ENCODE measurements at regions of chr5 and their contacts with region 1.

Region 1: DNA sequence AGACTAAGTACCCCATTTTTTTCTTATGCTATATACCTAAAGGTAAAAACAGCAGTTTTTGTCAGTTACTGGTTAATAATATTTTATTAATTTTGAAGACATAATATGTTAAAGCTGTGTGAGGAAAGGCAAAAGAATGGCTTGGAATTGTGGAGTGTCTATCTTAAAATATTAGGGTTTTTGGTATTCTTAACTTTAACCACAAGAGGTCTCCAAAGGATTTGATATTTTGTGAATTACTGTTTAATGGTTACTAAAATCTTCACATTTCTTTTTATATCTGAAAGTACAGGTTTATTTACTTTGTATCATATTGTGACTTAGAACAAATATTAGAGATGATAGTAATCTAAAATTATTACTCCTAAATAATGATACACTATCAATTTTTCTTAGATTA is 32.0 kb upstream of the DHFR start:
- DNase-seq: no peak
- H3K4me3 ChIP-seq: no peak overlapping the region
- H3K27ac ChIP-seq: no peak overlapping the region
- H3K4me1 ChIP-seq: no peaks in the 10 kb centered on the region
- H3K27me3 ChIP-seq: no peaks in the 10 kb centered on the region
- CTCF ChIP-seq: peak in 1 of 2 donors; percentile 29

Region 2: GRCh38 chr5:81105261-81105877 is 418.6 kb after region 1 on chr5:
- CTCF ChIA-PET with region 1: interaction called, 4 read pairs
- dilution Hi-C with region 1: no loop called
- in situ Hi-C with region 1: no loop called
- intact Hi-C with region 1: loop called (anchors 1 kb)
- DNase-seq: no peak
- H3K4me3 ChIP-seq: no peak overlapping the region
- H3K27ac ChIP-seq: no peak overlapping the region
- H3K4me1 ChIP-seq: no peaks in the 10 kb centered on the region
- H3K27me3 ChIP-seq: peaks cover 3% of the 10 kb centered on the region
- CTCF ChIP-seq: no peak

Region 3: DNA sequence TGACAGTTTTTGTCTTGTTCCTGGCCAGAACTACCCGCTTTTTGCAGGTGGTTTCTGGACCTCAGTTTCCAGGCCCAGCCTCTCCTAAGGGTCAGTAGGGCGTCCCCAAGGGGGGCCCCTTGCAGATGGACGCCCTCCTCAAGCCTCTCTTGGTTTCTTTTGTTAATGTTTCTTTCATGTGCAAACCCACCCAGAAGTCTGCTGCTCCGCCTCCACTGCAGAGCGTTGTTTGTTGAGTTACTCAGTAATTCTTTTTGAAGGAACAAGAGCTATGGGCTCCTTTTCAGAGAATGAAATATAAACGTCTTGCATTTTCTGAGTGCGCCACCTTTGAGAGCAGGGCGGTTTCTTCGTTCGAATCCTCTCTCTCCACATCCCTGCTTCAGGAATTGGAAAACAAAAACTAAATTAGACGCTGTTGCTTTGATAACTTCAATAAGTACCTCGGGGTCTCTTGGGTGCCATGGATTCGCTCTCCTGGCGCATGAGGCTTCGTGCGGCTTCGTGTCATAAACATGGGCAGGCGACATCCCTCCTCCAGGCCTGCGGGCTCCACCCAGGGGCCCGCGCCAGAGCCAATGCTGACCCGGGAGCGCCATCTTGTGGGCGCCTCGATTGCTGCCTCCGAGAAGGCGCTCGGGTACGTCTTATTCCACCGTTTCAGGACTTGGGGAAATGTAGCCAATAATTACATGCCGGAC is 508.0 kb after region 1 on chr5:
- CTCF ChIA-PET with region 1: no interaction called
- dilution Hi-C with region 1: no loop called
- in situ Hi-C with region 1: loop called in 1 of 2 experiments (anchors 25 kb)
- intact Hi-C with region 1: loop called (anchors 1 kb)
- DNase-seq: peak; percentile 56
- H3K4me3 ChIP-seq: peak overlapping the region in 2 of 3 experiments; percentile 8 to 21
- H3K27ac ChIP-seq: no peak overlapping the region
- H3K4me1 ChIP-seq: no peaks in the 10 kb centered on the region
- H3K27me3 ChIP-seq: peaks cover 2% of the 10 kb centered on the region
- CTCF ChIP-seq: peak; percentile 78 to 96